ENCODE measurements at regions of chr17 and their contacts with region 1.

Region 1: DNA sequence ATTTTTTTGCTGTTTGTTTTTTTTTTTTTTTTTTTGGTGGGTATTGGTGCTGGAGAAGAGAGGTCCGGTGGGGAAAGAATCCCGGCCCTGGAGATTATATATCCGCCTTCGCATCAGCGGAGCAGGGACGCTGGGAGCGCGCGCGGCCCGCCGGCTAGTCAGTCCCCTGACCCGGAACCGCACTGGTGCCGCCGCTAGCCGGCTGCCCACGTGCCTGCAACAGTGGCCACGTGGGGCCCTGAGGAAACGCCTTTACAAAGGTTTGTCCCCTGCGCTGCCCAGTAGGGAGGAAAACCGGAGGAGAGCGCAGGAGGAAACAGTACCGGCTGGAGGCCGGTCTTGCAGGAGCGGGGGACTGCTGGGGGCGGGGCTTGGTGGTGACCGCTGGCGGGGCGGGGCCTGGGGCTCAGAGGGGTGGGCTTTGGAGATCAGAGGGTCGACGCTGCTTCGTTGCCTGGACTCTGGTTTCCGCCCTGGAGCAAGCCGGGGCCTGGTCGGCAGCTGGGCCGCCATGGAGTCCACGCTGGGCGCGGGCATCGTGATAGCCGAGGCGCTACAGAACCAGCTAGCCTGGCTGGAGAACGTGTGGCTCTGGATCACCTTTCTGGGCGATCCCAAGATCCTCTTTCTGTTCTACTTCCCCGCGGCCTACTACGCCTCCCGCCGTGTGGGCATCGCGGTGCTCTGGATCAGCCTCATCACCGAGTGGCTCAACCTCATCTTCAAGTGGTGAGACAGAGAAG is at the start of gene G6PC3:
- DNase-seq: peak; percentile 97
- ATAC-seq: peak; percentile 83 to 91
- H3K4me3 ChIP-seq: peak within 1 kb of the TSS; percentile 79 to 94 (median 91)
- H3K27ac ChIP-seq: peak within 1 kb of the TSS; percentile 90 to 96 (median 94)
- H3K4me1 ChIP-seq: peaks cover 36 to 46% of the 10 kb centered on the region in 2 donors
- H3K27me3 ChIP-seq: no peaks in the 10 kb centered on the region
- CTCF ChIP-seq: peak in 3 of 5 experiments; percentile 18 to 43 (median 22)
- POLR2A ChIP-seq: peak; percentile 88 to 91
- total RNA-seq, gene G6PC3: 30.5 to 40.5 (median 36.4) TPM

Region 2: GRCh38 chr17:44014437-44015172 is 56.0 kb before region 1 on chr17 and contains the start of gene TMEM101:
- in situ Hi-C with region 1: no loop called
- intact Hi-C with region 1: loop called (anchors 2 kb)
- DNase-seq: peak; percentile 86 to 90
- ATAC-seq: peak; percentile 98 to 99
- H3K4me3 ChIP-seq: peak within 1 kb of the TSS; percentile 79 to 98 (median 86)
- H3K27ac ChIP-seq: peak within 1 kb of the TSS; percentile 71 to 87 (median 82)
- H3K4me1 ChIP-seq: peaks cover 8 to 9% of the 10 kb centered on the region in 2 donors
- H3K27me3 ChIP-seq: no peaks in the 10 kb centered on the region
- CTCF ChIP-seq: no peak
- POLR2A ChIP-seq: no peak
- total RNA-seq, gene TMEM101: 28.8 to 38.3 (median 36.4) TPM

Region 3: GRCh38 chr17:44110823-44111633 is 40.4 kb after region 1 on chr17:
- in situ Hi-C with region 1: no loop called
- intact Hi-C with region 1: loop called (anchors 2 kb)
- DNase-seq: peak; percentile 98 to 99
- ATAC-seq: peak; percentile 43 to 62
- H3K4me3 ChIP-seq: peak overlapping the region; percentile 29 to 76 (median 67)
- H3K27ac ChIP-seq: peak overlapping the region; percentile 92 to 94 (median 94)
- H3K4me1 ChIP-seq: peaks cover 94 to 97% of the 10 kb centered on the region in 2 donors
- H3K27me3 ChIP-seq: no peaks in the 10 kb centered on the region
- CTCF ChIP-seq: peak in 2 of 5 experiments; percentile 23 to 36
- POLR2A ChIP-seq: peak; percentile 98 to 99

Region 4: GRCh38 chr17:44123356-44124117 is 52.9 kb after region 1 on chr17 and contains the start of gene HDAC5:
- in situ Hi-C with region 1: loop called in 2 of 4 experiments (anchors 5 to 10 kb)
- intact Hi-C with region 1: loop called (anchors 1 kb)
- DNase-seq: peak; percentile 94 to 96
- ATAC-seq: peak; percentile 93 to 94
- H3K4me3 ChIP-seq: peak within 1 kb of the TSS; percentile 81 to 97 (median 89)
- H3K27ac ChIP-seq: peak within 1 kb of the TSS; percentile 93 to 99 (median 96)
- H3K4me1 ChIP-seq: peaks cover 42 to 48% of the 10 kb centered on the region in 2 donors
- H3K27me3 ChIP-seq: no peaks in the 10 kb centered on the region
- CTCF ChIP-seq: peak; percentile 59 to 78 (median 75)
- POLR2A ChIP-seq: peak; percentile 92 to 97
- total RNA-seq, gene HDAC5: 36.5 to 301 (median 88.0) TPM

Region 5: DNA sequence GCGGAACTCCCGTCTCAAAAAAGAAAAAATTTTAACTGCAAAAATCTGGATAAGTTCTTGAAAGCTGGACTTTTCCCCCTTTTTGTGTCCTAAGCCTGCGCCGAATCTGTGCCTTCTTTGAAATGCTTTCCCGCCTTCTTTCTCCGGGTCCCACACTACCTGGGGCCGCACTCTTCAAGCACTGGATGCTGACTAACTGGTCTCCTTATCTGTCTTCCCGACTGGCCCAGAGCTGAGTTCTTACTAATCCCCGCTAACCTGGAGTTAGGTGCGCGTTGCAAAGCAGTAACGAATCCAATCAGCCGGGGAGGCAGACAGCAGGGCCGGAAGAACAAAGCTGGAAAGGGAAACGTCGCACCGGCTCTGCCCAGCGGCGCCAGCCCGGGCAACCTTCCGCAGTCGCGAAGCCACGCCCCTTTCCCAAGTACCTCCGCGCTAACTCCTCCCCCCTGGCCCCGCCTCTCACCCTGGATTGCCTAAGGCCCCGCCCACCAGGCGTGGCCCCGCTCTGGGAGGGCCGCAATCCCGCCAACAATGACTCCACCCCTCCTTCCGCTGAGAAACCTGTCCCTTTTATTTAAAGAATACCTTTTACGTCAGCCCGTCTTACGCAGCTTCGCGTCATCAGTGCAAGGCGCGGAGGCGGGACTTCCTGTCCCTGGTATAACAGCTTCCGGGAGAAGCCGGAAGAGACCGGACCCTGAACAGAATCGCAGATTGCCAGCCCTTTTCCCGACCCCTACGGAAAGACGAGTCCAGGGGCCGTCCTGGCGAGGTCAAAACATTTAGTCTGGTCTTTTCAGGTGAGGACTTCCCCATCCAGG is 115.9 kb after region 1 on chr17 and contains the start of gene TMUB2:
- in situ Hi-C with region 1: no loop called
- intact Hi-C with region 1: loop called (anchors 5 kb)
- DNase-seq: peak; percentile 98 to 99
- ATAC-seq: peak; percentile 93 to 97
- H3K4me3 ChIP-seq: peak within 1 kb of the TSS; percentile 88 to 99 (median 90)
- H3K27ac ChIP-seq: peak within 1 kb of the TSS; percentile 93 to 99 (median 96)
- H3K4me1 ChIP-seq: peaks cover 27 to 40% of the 10 kb centered on the region in 2 donors
- H3K27me3 ChIP-seq: no peaks in the 10 kb centered on the region
- CTCF ChIP-seq: no peak
- POLR2A ChIP-seq: peak; percentile 74 to 77
- total RNA-seq, gene TMUB2: 25.6 to 34.7 (median 27.4) TPM